ENCODE measurements at regions of chr14 and their contacts with region 1.

Region 1: GRCh38 chr14:103984196-103984595 is 41.9 kb upstream of the RD3L start:
- DNase-seq: no peak
- H3K4me3 ChIP-seq: no peak overlapping the region
- H3K4me3 Mint-ChIP-seq: no peak overlapping the region
- H3K27ac ChIP-seq: no peak overlapping the region
- H3K27ac Mint-ChIP-seq: no peak overlapping the region
- H3K4me1 ChIP-seq: no peaks in the 10 kb centered on the region
- H3K4me1 Mint-ChIP-seq: no peaks in the 10 kb centered on the region
- H3K27me3 ChIP-seq: no peaks in the 10 kb centered on the region
- H3K27me3 Mint-ChIP-seq: peaks cover 0 to 6% (median 0%) of the 10 kb centered on the region in 3 donors
- CTCF ChIP-seq: no peak

Region 2: GRCh38 chr14:103606963-103607668 is 377.1 kb before region 1 on chr14:
- intact Hi-C with region 1: no loop called
- DNase-seq: peak; percentile 47 to 65 (median 52)
- H3K4me3 ChIP-seq: peak overlapping the region; percentile 1 to 70 (median 26)
- H3K4me3 Mint-ChIP-seq: peak overlapping the region; percentile 71 to 95
- H3K27ac ChIP-seq: no peak overlapping the region
- H3K27ac Mint-ChIP-seq: peak overlapping the region in 5 of 7 donors; percentile 2 to 81 (median 11)
- H3K4me1 ChIP-seq: peaks cover 23 to 25% of the 10 kb centered on the region in 2 donors
- H3K4me1 Mint-ChIP-seq: peaks cover 40% of the 10 kb centered on the region
- H3K27me3 ChIP-seq: peaks cover 0 to 19% of the 10 kb centered on the region in 2 donors
- H3K27me3 Mint-ChIP-seq: peaks cover 17 to 53% (median 36%) of the 10 kb centered on the region in 3 donors
- CTCF ChIP-seq: no peak

Region 3: GRCh38 chr14:103679351-103679750 is 304.8 kb before region 1 on chr14:
- intact Hi-C with region 1: no loop called
- DNase-seq: peak; percentile 54 to 69 (median 54)
- H3K4me3 ChIP-seq: no peak overlapping the region
- H3K4me3 Mint-ChIP-seq: no peak overlapping the region
- H3K27ac ChIP-seq: peak overlapping the region in 1 of 2 donors; percentile 1
- H3K27ac Mint-ChIP-seq: peak overlapping the region in 6 of 7 donors; percentile 4 to 84 (median 60)
- H3K4me1 ChIP-seq: no peaks in the 10 kb centered on the region
- H3K4me1 Mint-ChIP-seq: peaks cover 4% of the 10 kb centered on the region
- H3K27me3 ChIP-seq: no peaks in the 10 kb centered on the region
- H3K27me3 Mint-ChIP-seq: peaks cover 0 to 2% (median 0%) of the 10 kb centered on the region in 3 donors
- CTCF ChIP-seq: peak; percentile 72

Region 4: DNA sequence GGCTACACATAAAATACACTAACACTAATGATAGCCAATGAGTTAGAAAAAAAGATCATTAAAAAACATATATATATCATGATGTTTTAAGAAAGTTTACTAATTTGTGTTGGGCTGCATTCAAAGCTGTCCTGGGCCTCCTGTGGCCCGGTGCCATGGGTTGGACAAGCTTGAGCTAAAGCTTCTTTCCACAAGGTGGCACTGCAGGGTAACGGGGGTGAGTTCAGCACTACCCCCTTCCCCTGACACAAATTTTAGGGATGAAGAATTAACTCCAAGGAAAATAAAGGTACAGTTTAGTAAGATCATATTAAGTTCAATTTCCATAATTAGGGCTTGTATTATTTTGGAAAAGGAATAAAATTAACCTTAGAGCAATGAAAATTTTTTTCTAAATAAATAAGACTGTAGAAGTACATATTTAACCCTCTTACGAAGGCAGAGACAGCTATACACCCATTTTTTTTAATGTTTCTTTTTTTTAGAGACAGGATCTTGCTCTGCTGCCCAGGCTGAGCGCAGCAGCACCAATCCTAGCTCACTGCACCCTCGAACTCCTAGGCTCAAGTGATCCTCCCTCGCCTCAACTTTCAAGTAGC is 175.7 kb before region 1 on chr14:
- intact Hi-C with region 1: loop called (anchors 2 to 5 kb)
- DNase-seq: peak; percentile 18 to 44 (median 26)
- H3K4me3 ChIP-seq: no peak overlapping the region
- H3K4me3 Mint-ChIP-seq: no peak overlapping the region
- H3K27ac ChIP-seq: no peak overlapping the region
- H3K27ac Mint-ChIP-seq: no peak overlapping the region
- H3K4me1 ChIP-seq: no peaks in the 10 kb centered on the region
- H3K4me1 Mint-ChIP-seq: no peaks in the 10 kb centered on the region
- H3K27me3 ChIP-seq: no peaks in the 10 kb centered on the region
- H3K27me3 Mint-ChIP-seq: peaks cover 5 to 10% (median 10%) of the 10 kb centered on the region in 3 donors
- CTCF ChIP-seq: peak; percentile 89

Region 5: DNA sequence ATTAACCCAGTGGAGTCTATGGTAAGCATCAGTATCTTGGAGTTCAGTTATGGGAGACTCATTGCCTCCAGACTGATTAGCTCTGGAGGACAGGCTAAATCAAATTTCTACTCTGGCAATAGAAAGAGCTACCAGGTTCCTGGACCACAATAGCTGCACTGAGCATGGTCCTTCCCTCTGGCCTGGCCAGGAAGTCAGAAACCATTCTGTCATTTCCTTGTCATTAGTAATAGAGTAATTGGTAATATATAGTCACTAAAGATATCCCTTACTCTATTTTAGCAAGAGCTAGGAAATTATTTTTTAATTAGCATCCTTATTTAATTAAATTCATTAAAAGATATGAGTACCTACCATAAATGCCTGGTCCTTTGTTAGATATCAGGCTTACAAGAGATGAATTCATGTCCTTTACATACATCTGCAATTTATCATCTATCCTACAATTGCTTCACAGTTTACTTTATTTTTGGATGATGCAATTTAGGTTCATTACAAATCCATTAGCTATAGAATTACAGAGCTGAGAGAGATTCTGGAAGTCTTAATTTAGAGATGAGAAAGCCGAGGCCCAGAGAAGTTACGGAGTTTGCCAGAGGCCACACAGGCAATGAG is 79.6 kb before region 1 on chr14:
- intact Hi-C with region 1: loop called (anchors 5 kb)
- DNase-seq: no peak
- H3K4me3 ChIP-seq: no peak overlapping the region
- H3K4me3 Mint-ChIP-seq: no peak overlapping the region
- H3K27ac ChIP-seq: no peak overlapping the region
- H3K27ac Mint-ChIP-seq: no peak overlapping the region
- H3K4me1 ChIP-seq: peaks cover 0 to 6% of the 10 kb centered on the region in 2 donors
- H3K4me1 Mint-ChIP-seq: peaks cover 12% of the 10 kb centered on the region
- H3K27me3 ChIP-seq: no peaks in the 10 kb centered on the region
- H3K27me3 Mint-ChIP-seq: peaks cover 3 to 6% (median 5%) of the 10 kb centered on the region in 3 donors
- CTCF ChIP-seq: no peak

Measured in CD14-positive monocyte (primary cell).